ACHN (cell line): ENCODE measurements at regions of chr5 and their contacts with region 1.

Region 1: DNA sequence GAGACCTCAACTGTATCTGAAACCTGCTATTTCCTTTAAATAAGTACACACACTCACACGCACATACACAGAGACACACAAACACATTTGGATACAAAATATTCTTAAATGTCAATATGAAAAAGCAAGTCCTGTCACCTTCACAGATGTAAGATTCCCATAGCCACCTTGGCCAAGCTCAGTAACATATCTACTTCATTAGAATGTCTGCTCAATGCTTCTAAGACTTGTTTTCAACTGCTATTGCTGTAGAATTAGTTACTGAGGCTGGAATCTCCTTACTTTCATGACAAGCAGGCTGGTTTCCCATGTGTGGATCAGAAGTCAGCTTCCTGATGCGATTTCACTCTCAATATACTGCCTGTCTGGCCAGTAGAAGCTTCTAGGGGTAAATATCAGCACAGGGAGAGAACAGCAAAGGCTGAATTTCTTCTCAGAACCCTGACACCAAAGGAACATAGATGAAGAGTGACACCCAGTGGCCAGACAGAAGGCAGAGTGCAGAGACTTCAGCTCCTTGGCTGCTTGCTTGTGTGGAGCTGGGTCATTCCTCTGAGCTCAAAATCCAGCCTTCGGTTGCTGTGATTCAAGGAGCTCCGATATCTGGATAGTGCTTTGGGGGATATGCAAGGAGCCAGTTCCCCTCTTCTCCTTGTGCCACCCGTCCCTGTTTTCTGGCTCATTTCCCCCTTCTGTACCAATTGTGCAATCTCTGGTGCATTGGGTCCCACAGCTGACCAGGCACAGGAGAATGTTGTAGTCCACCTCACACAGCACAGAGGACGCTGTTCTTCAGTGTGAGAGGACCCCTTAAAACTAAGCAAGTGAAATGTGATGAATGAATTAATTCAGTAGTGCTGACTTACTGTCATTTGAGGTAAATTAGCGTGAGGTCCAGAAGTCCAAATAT is 26.6 kb upstream of the ABLIM3 start:
- DNase-seq: peak; percentile 82

Region 2: DNA sequence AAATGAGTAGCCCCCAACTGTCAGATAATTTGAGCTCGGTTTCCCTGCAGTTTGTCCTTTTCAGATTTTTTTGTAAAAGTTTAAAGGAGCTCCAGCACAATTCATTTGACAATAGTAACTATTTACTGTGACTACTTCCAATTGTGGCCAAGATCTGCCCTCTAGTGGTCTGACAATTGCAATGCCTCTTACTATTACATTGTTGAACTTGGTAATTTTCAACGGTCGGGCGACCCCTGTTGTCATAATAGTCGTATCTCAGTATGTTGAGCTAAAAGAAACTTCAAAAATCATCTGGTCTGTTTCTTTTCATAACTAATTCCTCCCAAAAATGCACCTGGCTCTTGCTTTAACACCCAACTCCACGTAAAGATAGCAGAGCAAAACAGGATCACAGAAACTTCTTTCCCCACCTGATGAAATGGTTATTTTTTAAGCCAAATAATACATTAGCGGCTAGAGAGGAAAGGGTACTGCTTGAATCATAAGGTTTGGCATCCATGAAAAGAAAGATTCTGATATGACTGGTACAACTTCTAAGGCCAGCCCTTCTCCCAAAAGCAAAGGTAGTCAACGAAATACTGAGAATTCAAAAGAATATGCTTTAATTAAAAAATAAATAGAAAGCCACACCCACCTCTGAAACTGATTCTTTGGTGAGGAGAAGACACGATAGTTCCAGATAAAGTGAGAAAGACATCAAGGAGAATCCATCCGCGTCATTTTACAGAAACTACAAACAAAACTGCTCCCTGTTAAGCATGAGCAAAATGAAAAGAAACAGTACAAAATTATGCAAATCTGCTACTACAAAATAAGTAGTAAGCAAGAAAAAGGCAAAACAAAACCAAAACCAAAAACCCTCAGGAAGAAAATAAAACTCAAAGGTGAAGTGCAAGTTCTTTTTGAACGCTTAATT is 383.5 kb before region 1 on chr5:
- in situ Hi-C with region 1: loop called (anchors 25 kb)
- DNase-seq: peak; percentile 80